Left colon (tissue), 2 donors: ENCODE measurements at regions of chr11 and their contacts with region 1.

Region 1: DNA sequence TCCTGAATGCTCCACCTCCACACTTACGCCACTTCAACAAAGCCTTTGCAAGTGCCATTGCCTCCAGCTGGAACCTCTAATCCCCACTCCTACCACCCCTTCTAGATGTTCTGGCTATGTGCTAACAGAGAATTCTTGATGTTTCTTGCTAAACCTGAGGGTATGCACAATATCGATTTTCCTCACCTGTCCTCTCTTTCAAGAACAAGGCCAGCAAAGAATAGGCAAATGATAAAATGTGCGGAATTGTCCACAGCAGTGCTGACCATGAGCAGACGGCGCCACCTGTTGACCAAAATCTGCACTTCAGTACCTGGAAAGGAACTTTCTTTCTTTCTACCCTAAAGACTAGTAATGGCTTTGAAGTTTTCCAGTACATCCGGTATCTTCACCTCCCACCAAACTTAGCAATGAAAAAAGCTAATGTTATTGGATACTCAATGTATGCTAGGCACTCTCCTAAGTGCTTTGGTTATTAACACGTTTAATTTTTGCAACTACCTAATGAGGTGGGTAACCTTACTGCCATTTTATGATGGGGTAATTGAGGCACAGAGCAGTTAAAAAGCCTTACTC is 3.4 kb downstream of the TIMM10 start:
- DNase-seq: peak; percentile 44 to 89
- ATAC-seq: peak; percentile 16

Region 2: GRCh38 chr11:57345555-57346211 is 181.5 kb before region 1 on chr11:
- intact Hi-C with region 1: loop called in 1 of 2 experiments (anchors 10 kb)
- DNase-seq: peak; percentile 57 to 85
- ATAC-seq: peak; percentile 95

Region 3: DNA sequence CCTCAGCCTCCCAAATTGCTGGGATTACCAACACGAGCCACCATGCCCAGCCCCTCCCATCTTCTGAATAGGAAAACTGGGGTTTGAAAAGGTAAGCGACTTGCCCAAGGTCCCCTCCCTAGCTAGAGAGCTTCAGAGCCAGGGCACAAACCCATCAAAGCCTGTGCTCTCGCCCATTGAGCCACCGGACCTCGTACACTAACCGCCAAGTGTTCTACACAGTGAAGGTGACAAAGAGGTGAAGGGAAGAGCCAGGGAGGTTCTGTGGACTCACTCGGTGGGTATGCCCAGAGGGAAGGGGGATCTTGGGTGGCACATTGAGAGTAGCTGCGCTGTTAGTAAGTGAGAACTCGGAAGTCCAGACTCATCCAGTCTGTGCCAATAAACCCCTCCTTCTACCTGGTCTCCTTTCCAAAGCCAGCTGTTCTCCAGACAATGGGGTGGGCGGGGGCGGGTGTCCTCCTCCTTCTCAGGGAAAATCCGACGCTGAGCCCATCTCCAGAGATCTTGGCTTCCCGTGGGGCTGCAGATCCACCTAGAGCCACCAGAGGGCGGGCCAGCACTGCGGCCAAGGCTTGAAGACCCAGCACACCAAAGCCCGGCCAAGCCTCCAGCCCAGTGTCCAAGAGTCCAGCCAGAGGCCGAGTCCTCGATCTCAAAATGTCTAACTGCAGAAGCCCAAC is 70.0 kb before region 1 on chr11:
- intact Hi-C with region 1: loop called in 1 of 2 experiments (anchors 5 kb)
- DNase-seq: peak; percentile 76 to 88
- ATAC-seq: peak; percentile 62

Region 4: GRCh38 chr11:57493507-57494503 is 33.3 kb before region 1 on chr11:
- intact Hi-C with region 1: loop called in 1 of 2 experiments (anchors 5 kb)
- DNase-seq: peak; percentile 43 to 68
- ATAC-seq: peak; percentile 78

Region 5: DNA sequence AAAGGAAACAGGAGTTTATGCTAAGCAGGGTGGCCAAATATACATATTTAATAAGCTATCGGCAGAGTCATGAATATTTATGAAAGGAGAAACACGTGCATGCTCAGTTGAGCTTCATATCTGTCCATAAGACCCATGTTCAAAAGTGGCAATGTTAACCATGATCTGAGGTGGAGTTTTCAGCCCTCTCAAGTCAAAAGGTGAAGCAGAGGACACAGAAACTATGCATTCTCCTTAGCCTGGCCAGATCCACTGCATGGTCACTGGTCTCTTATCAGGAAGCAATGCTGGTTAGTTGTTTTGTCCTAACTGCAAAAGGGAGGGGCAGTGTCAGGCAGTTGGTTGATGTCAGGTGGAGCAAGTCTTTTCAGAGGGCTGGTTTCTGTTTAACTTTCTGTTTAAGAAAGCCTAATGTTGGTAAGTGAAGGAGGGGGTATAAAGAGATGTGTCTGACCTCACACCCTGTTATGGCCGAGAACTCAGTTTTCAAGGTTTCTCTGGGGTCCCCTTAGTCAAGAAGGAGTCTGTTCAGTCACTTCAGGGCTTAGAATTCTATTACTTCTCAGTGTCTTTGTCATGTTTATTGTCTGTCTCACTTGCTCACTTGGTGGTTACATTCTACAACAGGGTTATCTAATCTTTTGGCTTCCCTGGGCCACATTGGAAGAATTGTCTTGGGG is 208.6 kb after region 1 on chr11:
- intact Hi-C with region 1: no loop called
- DNase-seq: peak in 1 of 2 donors; percentile 32
- ATAC-seq: peak; percentile 86